GM12878 (cell line): ENCODE measurements at regions of chr6 and their contacts with region 1.

Region 1: GRCh38 chr6:134373282-134373922 is 55.5 kb upstream of the SGK1 start:
- DNase-seq: peak; percentile 85
- ATAC-seq: peak; percentile 97
- H3K4me3 ChIP-seq: peak overlapping the region; percentile 15; the same call in 1 of the 2 replicates
- H3K27ac ChIP-seq: peak overlapping the region; percentile 70
- H3K4me1 ChIP-seq: peaks cover 22% of the 10 kb centered on the region
- H3K27me3 ChIP-seq: no peaks in the 10 kb centered on the region
- CTCF ChIP-seq: no peak
- EP300 ChIP-seq: peak; percentile 61 to 82; a peak in 2 of 4 replicates
- POLR2A ChIP-seq: no peak
- RAD21 ChIP-seq: peak; percentile 17; the same call in 1 of the 2 replicates

Region 2: GRCh38 chr6:133952815-133953633 is 420.4 kb before region 1 on chr6 and contains the start of gene TBPL1:
- CTCF ChIA-PET with region 1: no interaction called
- POLR2A ChIA-PET with region 1: no interaction called
- RAD21 ChIA-PET with region 1: no interaction called
- SMC1A ChIA-PET with region 1: no interaction called
- in situ Hi-C with region 1: no loop called
- intact Hi-C with region 1: loop called (anchors 10 kb)
- DNase-seq: peak; percentile 90
- ATAC-seq: peak; percentile 88
- H3K4me3 ChIP-seq: peak within 1 kb of the TSS; percentile 88
- H3K27ac ChIP-seq: peak within 1 kb of the TSS; percentile 74
- H3K4me1 ChIP-seq: peaks cover 11% of the 10 kb centered on the region
- H3K27me3 ChIP-seq: no peaks in the 10 kb centered on the region
- CTCF ChIP-seq: no peak
- EP300 ChIP-seq: peak in 1 of 2 experiments; percentile 62; a peak in 1 of 4 replicates
- POLR2A ChIP-seq: peak; percentile 94
- RAD21 ChIP-seq: no peak
- polyA plus RNA-seq, gene TBPL1: 34.9 to 52.5 TPM

Region 3: DNA sequence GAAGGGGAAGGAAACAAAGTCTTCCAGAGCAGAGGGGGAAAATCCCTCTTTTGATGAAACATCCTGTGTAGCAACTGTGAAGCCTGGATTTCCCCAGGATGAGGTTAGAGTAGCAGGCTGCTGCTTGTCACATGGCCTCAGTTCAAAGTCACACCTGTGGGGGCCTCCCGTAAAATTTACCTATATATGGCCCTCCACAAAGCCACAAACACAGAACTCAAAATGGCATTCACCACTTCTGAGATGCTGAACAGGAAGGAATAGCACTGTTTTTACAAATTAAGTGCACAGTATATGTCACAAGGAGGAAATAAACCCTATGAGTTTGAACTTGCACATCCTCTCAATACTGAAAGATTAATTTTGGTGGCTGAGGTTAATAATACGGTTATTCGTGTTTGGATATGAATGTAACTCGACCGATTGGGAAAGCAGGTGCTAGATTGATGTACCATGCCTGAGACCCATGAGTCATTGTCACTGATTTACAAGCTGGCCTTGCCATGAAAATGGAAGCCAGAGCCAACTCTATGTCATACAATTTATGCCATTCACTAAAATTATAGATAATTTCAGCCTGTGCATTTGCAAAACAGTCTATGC is 126.1 kb before region 1 on chr6:
- CTCF ChIA-PET with region 1: interaction called, 4 read pairs
- POLR2A ChIA-PET with region 1: interaction called, 3 read pairs
- RAD21 ChIA-PET with region 1: interaction called, 32 read pairs
- SMC1A ChIA-PET with region 1: interaction called, 8 read pairs
- in situ Hi-C with region 1: no loop called
- intact Hi-C with region 1: loop called (anchors 2 kb)
- DNase-seq: peak; percentile 97
- ATAC-seq: peak; percentile 94
- H3K4me3 ChIP-seq: no peak overlapping the region
- H3K27ac ChIP-seq: peak overlapping the region; percentile 64
- H3K4me1 ChIP-seq: peaks cover 31% of the 10 kb centered on the region
- H3K27me3 ChIP-seq: no peaks in the 10 kb centered on the region; a peak in 1 of 4 replicates
- CTCF ChIP-seq: no peak
- EP300 ChIP-seq: peak; percentile 90 to 97
- POLR2A ChIP-seq: no peak
- RAD21 ChIP-seq: no peak

Region 4: DNA sequence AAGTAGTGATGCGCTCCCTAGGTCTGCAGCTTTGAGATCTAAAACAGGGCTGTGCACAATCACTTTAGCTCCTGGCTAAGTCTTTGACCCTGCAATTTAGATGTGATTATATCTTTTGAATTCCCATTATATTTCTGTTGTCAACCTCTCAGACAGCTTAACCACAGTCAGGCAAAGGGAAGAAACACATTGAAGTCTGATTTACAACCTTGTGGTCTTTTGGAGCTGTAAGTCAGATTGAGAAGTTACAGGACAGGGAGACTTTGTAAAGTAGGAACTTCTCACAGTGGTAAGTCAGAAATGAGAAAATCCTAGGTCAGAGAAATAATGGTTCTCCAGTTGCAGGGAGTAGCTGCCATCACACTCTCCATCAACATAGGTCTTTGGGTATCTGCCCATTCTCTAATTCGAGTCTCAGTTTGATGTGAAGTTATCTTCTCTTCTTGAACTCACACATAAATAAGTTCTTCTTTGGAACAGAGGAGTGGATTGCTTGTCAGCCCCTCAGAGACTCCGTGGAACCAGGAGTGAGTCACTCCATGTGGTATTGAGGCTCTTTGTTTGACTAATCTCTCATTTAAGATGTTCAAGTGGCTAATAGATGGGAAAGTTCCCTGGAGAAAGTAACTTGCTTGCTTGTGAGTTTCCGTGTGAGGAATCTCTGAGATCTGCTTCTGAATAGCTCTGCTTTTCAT is 20.5 kb before region 1 on chr6:
- CTCF ChIA-PET with region 1: interaction called, 7 read pairs
- POLR2A ChIA-PET with region 1: interaction called, 6 read pairs
- RAD21 ChIA-PET with region 1: interaction called, 11 read pairs
- SMC1A ChIA-PET with region 1: interaction called, 23 read pairs
- in situ Hi-C with region 1: no loop called
- intact Hi-C with region 1: no loop called
- DNase-seq: no peak
- ATAC-seq: no peak
- H3K4me3 ChIP-seq: no peak overlapping the region
- H3K27ac ChIP-seq: no peak overlapping the region
- H3K4me1 ChIP-seq: no peaks in the 10 kb centered on the region
- H3K27me3 ChIP-seq: no peaks in the 10 kb centered on the region
- CTCF ChIP-seq: no peak
- EP300 ChIP-seq: no peak
- POLR2A ChIP-seq: no peak
- RAD21 ChIP-seq: no peak

Region 5: GRCh38 chr6:134394208-134394607 is 20.8 kb after region 1 on chr6:
- CTCF ChIA-PET with region 1: no interaction called
- POLR2A ChIA-PET with region 1: interaction called, 6 read pairs
- RAD21 ChIA-PET with region 1: interaction called, 9 read pairs
- SMC1A ChIA-PET with region 1: interaction called, 10 read pairs
- in situ Hi-C with region 1: no loop called
- intact Hi-C with region 1: no loop called
- DNase-seq: no peak
- ATAC-seq: no peak
- H3K4me3 ChIP-seq: no peak overlapping the region
- H3K27ac ChIP-seq: no peak overlapping the region
- H3K4me1 ChIP-seq: no peaks in the 10 kb centered on the region; the same call in 1 of the 2 replicates
- H3K27me3 ChIP-seq: no peaks in the 10 kb centered on the region
- CTCF ChIP-seq: no peak
- EP300 ChIP-seq: no peak
- POLR2A ChIP-seq: no peak
- RAD21 ChIP-seq: no peak

Region 6: DNA sequence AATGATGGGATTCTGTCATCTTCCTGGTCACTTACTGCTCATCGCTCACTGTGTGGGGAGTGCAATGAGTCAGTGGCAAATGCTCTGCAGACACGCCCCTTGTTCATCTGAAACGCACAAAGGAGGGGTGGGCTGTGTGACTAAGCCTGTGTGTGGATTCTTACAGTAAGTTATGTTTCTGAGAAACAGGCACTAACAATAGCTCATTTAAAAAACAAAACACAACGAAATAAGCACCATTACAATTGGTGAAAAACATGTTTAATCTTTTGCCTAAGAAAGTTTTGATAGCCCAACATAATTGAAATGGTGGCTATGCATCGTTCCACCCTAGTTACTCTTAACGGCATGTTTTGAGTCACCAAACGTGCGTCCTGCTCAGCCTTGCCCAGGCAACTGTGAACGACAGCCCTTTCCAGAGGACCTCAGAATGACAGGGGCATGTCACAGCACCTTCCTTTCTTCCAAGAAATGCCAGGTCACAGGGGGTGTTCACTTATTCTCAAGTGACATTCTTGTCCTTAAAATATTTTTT is 62.9 kb after region 1 on chr6:
- CTCF ChIA-PET with region 1: interaction called, 3 read pairs
- POLR2A ChIA-PET with region 1: interaction called, 3 read pairs
- RAD21 ChIA-PET with region 1: interaction called, 7 read pairs
- SMC1A ChIA-PET with region 1: interaction called, 12 read pairs
- in situ Hi-C with region 1: no loop called
- intact Hi-C with region 1: loop called (anchors 2 kb)
- DNase-seq: peak; percentile 57
- ATAC-seq: peak; percentile 95
- H3K4me3 ChIP-seq: peak overlapping the region; percentile 9; the same call in 1 of the 2 replicates
- H3K27ac ChIP-seq: no peak overlapping the region
- H3K4me1 ChIP-seq: peaks cover 9% of the 10 kb centered on the region
- H3K27me3 ChIP-seq: no peaks in the 10 kb centered on the region
- CTCF ChIP-seq: no peak
- EP300 ChIP-seq: no peak
- POLR2A ChIP-seq: no peak
- RAD21 ChIP-seq: no peak